WTC11 (cell line): ENCODE measurements at regions of chr11 and their contacts with region 1.

Region 1: GRCh38 chr11:43504316-43504950 is 145.7 kb downstream of the TTC17 start:
- DNase-seq: peak; percentile 44
- ATAC-seq: peak; percentile 91
- H3K4me3 Mint-ChIP-seq: no peak overlapping the region
- H3K27ac Mint-ChIP-seq: no peak overlapping the region
- H3K4me1 Mint-ChIP-seq: peaks cover 9% of the 10 kb centered on the region
- H3K27me3 Mint-ChIP-seq: peaks cover 10% of the 10 kb centered on the region
- CTCF ChIP-seq: no peak; the same call in 1 of the 2 replicates

Region 2: GRCh38 chr11:43234881-43235280 is 269.6 kb before region 1 on chr11:
- CTCF ChIA-PET with region 1: no interaction called
- POLR2A ChIA-PET with region 1: no interaction called
- DNase-seq: no peak
- ATAC-seq: no peak
- H3K4me3 Mint-ChIP-seq: no peak overlapping the region
- H3K27ac Mint-ChIP-seq: no peak overlapping the region
- H3K4me1 Mint-ChIP-seq: no peaks in the 10 kb centered on the region
- H3K27me3 Mint-ChIP-seq: peaks cover 14% of the 10 kb centered on the region
- CTCF ChIP-seq: no peak

Region 3: GRCh38 chr11:43486141-43486540 is 18.3 kb before region 1 on chr11:
- CTCF ChIA-PET with region 1: interaction called, 12 read pairs
- POLR2A ChIA-PET with region 1: no interaction called
- DNase-seq: no peak
- ATAC-seq: no peak
- H3K4me3 Mint-ChIP-seq: no peak overlapping the region
- H3K27ac Mint-ChIP-seq: no peak overlapping the region
- H3K4me1 Mint-ChIP-seq: no peaks in the 10 kb centered on the region
- H3K27me3 Mint-ChIP-seq: no peaks in the 10 kb centered on the region
- CTCF ChIP-seq: no peak

Region 4: GRCh38 chr11:43547889-43548381 is 43.5 kb after region 1 on chr11:
- CTCF ChIA-PET with region 1: interaction called, 14 read pairs
- POLR2A ChIA-PET with region 1: no interaction called
- DNase-seq: peak; percentile 58
- ATAC-seq: peak; percentile 39
- H3K4me3 Mint-ChIP-seq: 0 out of 2 replicates have a peak overlapping the region, but pooled peaks have one; percentile 31
- H3K27ac Mint-ChIP-seq: no peak overlapping the region
- H3K4me1 Mint-ChIP-seq: peaks cover 11% of the 10 kb centered on the region
- H3K27me3 Mint-ChIP-seq: peaks cover 70% of the 10 kb centered on the region
- CTCF ChIP-seq: no peak

Region 5: DNA sequence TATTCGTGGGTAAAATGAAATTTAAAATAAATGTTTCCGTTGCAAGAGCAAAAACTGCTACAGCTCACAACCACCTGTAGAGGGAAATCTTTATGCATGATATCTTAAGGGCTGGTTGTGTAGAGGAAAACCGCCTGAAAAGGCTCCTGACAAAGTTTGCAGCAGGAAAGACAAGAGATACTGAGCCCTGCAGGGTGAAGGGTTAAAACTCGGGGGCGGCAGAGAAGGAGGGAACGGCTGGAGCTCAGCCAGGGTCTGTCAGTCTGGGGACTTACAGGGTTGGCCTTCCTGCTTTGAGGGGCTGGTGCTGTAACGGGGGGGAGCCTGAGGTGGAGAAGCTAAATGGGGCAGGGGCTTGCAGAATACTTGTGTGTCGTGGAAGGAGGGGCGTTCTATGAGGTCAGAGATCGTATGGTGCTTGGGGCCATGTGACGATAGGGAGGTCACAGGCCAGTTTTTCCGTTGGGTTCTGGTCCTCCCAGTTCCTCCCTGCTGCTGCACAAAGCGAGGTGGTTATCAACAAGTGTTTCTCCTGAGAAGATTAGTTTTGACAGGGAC is 53.2 kb after region 1 on chr11:
- CTCF ChIA-PET with region 1: interaction called, 154 read pairs
- POLR2A ChIA-PET with region 1: no interaction called
- DNase-seq: no peak
- ATAC-seq: peak; percentile 63
- H3K4me3 Mint-ChIP-seq: peak overlapping the region; percentile 69
- H3K27ac Mint-ChIP-seq: no peak overlapping the region
- H3K4me1 Mint-ChIP-seq: peaks cover 58% of the 10 kb centered on the region
- H3K27me3 Mint-ChIP-seq: peaks cover 38% of the 10 kb centered on the region
- CTCF ChIP-seq: no peak

Region 6: GRCh38 chr11:43567396-43567975 is 63.1 kb after region 1 on chr11:
- CTCF ChIA-PET with region 1: interaction called, 302 read pairs
- POLR2A ChIA-PET with region 1: no interaction called
- DNase-seq: no peak
- ATAC-seq: peak; percentile 88
- H3K4me3 Mint-ChIP-seq: no peak overlapping the region
- H3K27ac Mint-ChIP-seq: no peak overlapping the region
- H3K4me1 Mint-ChIP-seq: no peaks in the 10 kb centered on the region
- H3K27me3 Mint-ChIP-seq: peaks cover 57% of the 10 kb centered on the region
- CTCF ChIP-seq: peak; percentile 61; the same call in 1 of the 2 replicates